Aorta (tissue), 5 donors: ENCODE measurements at regions of chr5 and their contacts with region 1.

Region 1: DNA sequence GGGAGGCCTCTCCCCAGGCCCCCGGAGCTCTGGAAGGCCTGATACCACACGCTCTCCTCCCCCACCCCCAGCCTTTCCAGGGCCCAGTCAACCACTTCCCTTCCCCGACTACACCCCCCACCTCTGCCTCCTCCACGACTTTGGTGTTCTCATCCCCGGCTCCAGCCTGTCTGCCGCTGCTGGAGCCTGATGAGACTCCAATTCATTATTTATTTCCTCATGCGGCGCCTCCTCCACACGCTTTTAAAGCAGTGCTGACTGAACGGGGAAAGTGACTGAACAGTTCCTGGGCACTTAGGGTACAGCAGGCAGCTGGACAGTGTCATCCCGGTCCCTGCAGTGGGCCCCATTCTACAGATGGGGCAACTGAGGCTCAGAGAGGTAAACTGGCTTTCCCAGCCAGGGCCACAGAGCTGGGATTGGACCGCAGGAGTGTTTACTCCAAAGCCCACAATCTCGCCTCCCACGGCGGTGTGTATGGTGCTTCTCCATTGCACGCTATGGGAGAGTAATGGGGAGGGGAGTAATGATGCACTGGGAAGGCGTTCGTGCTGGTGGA is 15.9 kb upstream of the RPL26L1 start:
- DNase-seq: peak; percentile 64 to 74
- ATAC-seq: no peak
- H3K4me3 ChIP-seq: no peak overlapping the region
- H3K27ac ChIP-seq: no peak overlapping the region
- H3K4me1 ChIP-seq: no peaks in the 10 kb centered on the region
- H3K27me3 ChIP-seq: no peaks in the 10 kb centered on the region

Region 2: GRCh38 chr5:172463031-172463430 is 480.3 kb before region 1 on chr5:
- intact Hi-C with region 1: loop called in 1 of 2 experiments (anchors 10 kb)
- DNase-seq: no peak
- ATAC-seq: no peak
- H3K4me3 ChIP-seq: no peak overlapping the region
- H3K27ac ChIP-seq: no peak overlapping the region
- H3K4me1 ChIP-seq: no peaks in the 10 kb centered on the region
- H3K27me3 ChIP-seq: no peaks in the 10 kb centered on the region

Region 3: DNA sequence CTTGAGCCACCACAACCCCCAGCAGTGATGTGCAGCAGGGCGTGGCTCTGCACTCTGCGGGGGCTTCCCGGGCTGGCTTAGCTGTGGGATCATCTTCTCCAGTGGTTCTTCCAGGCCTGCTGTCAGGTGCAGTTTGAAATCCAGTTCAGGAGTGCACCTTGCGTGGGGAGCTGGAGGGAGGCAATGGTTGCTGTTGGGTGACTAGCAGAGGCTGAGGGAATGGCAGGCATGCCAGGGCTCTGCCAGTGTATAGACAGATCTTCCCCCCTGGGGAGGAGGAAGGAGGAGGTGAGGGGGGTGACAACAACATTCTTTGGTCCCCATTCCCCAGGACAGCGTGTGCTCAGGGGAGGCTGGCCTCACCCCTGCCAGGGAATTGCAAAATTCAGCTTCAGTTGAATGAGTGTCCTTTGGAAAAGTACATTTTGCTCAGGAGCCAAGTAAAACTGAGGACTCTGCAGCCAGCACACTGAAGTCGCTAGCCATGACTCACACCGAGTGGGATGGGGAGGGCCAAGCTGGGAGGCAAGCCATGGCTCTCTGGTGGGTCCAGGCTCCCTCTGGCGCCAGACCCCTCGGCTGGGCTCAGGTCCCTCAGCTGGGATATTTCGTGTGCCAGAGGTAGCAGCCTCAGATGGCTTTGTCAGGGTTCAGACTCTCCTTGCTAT is 74.3 kb before region 1 on chr5:
- intact Hi-C with region 1: loop called in 1 of 2 experiments (anchors 5 kb)
- DNase-seq: peak; percentile 91 to 94
- ATAC-seq: peak; percentile 89
- H3K4me3 ChIP-seq: no peak overlapping the region
- H3K27ac ChIP-seq: peak overlapping the region; percentile 80 to 91
- H3K4me1 ChIP-seq: peaks cover 3 to 4% of the 10 kb centered on the region in 2 donors
- H3K27me3 ChIP-seq: no peaks in the 10 kb centered on the region

Region 4: GRCh38 chr5:173187054-173187789 is 243.9 kb after region 1 on chr5:
- intact Hi-C with region 1: no loop called
- DNase-seq: no peak
- ATAC-seq: no peak
- H3K4me3 ChIP-seq: no peak overlapping the region
- H3K27ac ChIP-seq: no peak overlapping the region
- H3K4me1 ChIP-seq: no peaks in the 10 kb centered on the region
- H3K27me3 ChIP-seq: no peaks in the 10 kb centered on the region